ENCODE measurements at regions of chr18 and their contacts with region 1.

Region 1: DNA sequence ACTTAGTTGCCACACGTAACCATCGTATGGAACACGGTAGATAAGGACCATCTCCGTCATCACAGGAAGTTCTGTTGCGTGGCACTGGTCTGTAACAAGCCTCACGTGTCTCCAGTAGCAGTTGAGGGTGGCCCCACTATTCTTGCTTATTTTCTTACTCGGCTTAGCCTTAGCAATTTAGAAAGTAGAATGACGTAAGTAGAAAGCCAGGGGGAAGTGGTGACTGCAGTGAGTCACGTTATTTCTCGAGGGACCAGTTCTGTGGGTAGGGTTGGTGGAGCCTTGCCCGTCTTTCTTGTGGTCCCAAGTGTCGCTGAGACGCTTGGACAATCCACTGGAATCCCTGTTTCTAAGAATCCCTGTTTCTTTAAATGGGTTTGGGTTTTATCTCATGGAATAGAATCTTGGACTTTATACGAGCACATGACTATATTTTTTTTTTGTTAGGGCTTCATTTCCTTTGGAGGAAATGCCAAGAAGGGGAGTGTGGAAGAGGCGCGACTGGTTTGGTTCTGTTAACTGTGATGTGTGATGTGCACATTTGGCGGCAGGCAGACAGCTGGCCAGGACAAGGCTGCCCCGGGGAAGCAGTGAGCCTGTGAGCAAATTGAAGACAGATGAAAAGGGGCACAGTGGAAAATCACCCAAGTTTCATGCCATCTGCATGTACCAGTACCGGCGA is 96.2 kb downstream of the CABLES1 start:
- DNase-seq: peak; percentile 14 to 86 (median 70)
- ATAC-seq: peak; percentile 93
- H3K4me3 ChIP-seq: peak overlapping the region; percentile 10
- H3K4me3 Mint-ChIP-seq: peak overlapping the region in 9 of 10 donors; percentile 7 to 80 (median 55)
- H3K27ac ChIP-seq: no peak overlapping the region
- H3K27ac Mint-ChIP-seq: peak overlapping the region; percentile 76 to 96 (median 88)
- H3K4me1 ChIP-seq: peaks cover 8 to 14% of the 10 kb centered on the region in 2 donors
- H3K4me1 Mint-ChIP-seq: peaks cover 0 to 78% (median 21%) of the 10 kb centered on the region in 7 donors
- H3K27me3 ChIP-seq: no peaks in the 10 kb centered on the region
- H3K27me3 Mint-ChIP-seq: no peaks in the 10 kb centered on the region

Region 2: GRCh38 chr18:22694954-22695353 is 536.5 kb before region 1 on chr18:
- CTCF ChIA-PET with region 1: no interaction called
- POLR2A ChIA-PET with region 1: no interaction called
- intact Hi-C with region 1: no loop called
- DNase-seq: no peak
- ATAC-seq: no peak
- H3K4me3 ChIP-seq: no peak overlapping the region
- H3K4me3 Mint-ChIP-seq: no peak overlapping the region
- H3K27ac ChIP-seq: no peak overlapping the region
- H3K27ac Mint-ChIP-seq: no peak overlapping the region
- H3K4me1 ChIP-seq: no peaks in the 10 kb centered on the region
- H3K4me1 Mint-ChIP-seq: no peaks in the 10 kb centered on the region
- H3K27me3 ChIP-seq: no peaks in the 10 kb centered on the region
- H3K27me3 Mint-ChIP-seq: peaks cover 1 to 14% (median 9%) of the 10 kb centered on the region in 5 donors

Region 3: GRCh38 chr18:23020555-23021294 is 210.8 kb before region 1 on chr18:
- CTCF ChIA-PET with region 1: no interaction called
- POLR2A ChIA-PET with region 1: no interaction called
- intact Hi-C with region 1: loop called in 1 of 2 experiments (anchors 10 kb)
- DNase-seq: peak in 1 of 9 donors; percentile 2
- ATAC-seq: no peak
- H3K4me3 ChIP-seq: peak overlapping the region; percentile 43
- H3K4me3 Mint-ChIP-seq: peak overlapping the region in 9 of 10 donors; percentile 1 to 82 (median 65)
- H3K27ac ChIP-seq: peak overlapping the region; percentile 45
- H3K27ac Mint-ChIP-seq: peak overlapping the region in 7 of 9 donors; percentile 39 to 80 (median 53)
- H3K4me1 ChIP-seq: peaks cover 5 to 9% of the 10 kb centered on the region in 2 donors
- H3K4me1 Mint-ChIP-seq: peaks cover 0 to 17% (median 10%) of the 10 kb centered on the region in 7 donors
- H3K27me3 ChIP-seq: no peaks in the 10 kb centered on the region
- H3K27me3 Mint-ChIP-seq: no peaks in the 10 kb centered on the region

Region 4: DNA sequence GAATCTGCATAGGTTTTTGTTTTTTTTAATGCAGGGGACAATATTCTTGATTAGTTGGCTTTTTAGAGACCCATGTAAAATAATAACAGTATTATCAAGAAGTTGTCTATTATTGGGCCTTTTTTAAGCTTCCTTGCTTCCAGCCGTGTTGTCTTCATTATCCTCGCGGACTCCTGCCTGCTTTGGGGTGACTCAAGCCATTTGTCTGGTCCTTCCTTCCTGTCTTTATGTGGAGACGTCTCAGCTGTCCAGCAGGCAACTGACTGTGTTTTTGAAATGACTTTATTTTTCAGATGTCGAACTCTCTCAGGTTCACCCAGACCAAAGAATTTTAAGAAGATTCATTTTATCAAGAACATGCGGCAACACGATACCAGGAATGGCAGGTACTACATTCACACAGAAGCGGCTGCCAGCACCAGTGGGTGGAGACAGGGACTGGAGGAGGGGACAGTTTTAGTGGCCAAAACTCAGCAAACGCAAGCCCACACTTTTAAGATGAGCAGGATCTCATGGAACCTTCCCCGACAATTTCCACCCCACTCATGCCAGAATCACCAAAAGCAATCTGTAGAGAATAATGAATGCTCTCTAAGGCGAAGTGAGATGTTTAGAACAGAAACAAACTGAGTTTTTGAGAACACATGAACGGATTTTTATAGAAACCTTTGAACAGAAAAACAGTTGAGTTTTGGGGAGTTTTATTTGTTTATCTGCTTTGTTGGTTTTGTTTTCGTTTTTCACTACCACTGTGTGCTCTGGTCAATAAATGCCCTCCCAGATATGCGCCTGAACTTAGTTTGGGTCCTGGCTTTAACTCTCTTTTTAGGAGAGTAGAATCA is 37.1 kb before region 1 on chr18:
- CTCF ChIA-PET with region 1: no interaction called
- POLR2A ChIA-PET with region 1: no interaction called
- intact Hi-C with region 1: loop called in 1 of 2 experiments (anchors 5 kb)
- DNase-seq: no peak
- ATAC-seq: no peak
- H3K4me3 ChIP-seq: no peak overlapping the region
- H3K4me3 Mint-ChIP-seq: no peak overlapping the region
- H3K27ac ChIP-seq: no peak overlapping the region
- H3K27ac Mint-ChIP-seq: peak overlapping the region in 1 of 9 donors; percentile 4
- H3K4me1 ChIP-seq: no peaks in the 10 kb centered on the region
- H3K4me1 Mint-ChIP-seq: peaks cover 3 to 11% (median 7%) of the 10 kb centered on the region in 7 donors
- H3K27me3 ChIP-seq: no peaks in the 10 kb centered on the region
- H3K27me3 Mint-ChIP-seq: peaks cover 0 to 8% (median 0%) of the 10 kb centered on the region in 5 donors

Region 5: GRCh38 chr18:23259701-23260582 is 28.5 kb after region 1 on chr18:
- CTCF ChIA-PET with region 1: no interaction called
- POLR2A ChIA-PET with region 1: no interaction called
- intact Hi-C with region 1: loop called in 1 of 2 experiments (anchors 2 kb)
- DNase-seq: peak in 4 of 9 donors; percentile 15 to 21 (median 18)
- ATAC-seq: peak; percentile 49
- H3K4me3 ChIP-seq: peak overlapping the region; percentile 43
- H3K4me3 Mint-ChIP-seq: peak overlapping the region; percentile 63 to 92 (median 82)
- H3K27ac ChIP-seq: peak overlapping the region; percentile 54
- H3K27ac Mint-ChIP-seq: peak overlapping the region; percentile 1 to 89 (median 78)
- H3K4me1 ChIP-seq: peaks cover 0 to 25% of the 10 kb centered on the region in 2 donors
- H3K4me1 Mint-ChIP-seq: peaks cover 21 to 41% (median 35%) of the 10 kb centered on the region in 7 donors
- H3K27me3 ChIP-seq: no peaks in the 10 kb centered on the region
- H3K27me3 Mint-ChIP-seq: no peaks in the 10 kb centered on the region

Region 6: GRCh38 chr18:23629444-23629946 is 398.0 kb after region 1 on chr18:
- CTCF ChIA-PET with region 1: no interaction called
- POLR2A ChIA-PET with region 1: no interaction called
- intact Hi-C with region 1: no loop called
- DNase-seq: no peak
- ATAC-seq: no peak
- H3K4me3 ChIP-seq: no peak overlapping the region
- H3K4me3 Mint-ChIP-seq: no peak overlapping the region
- H3K27ac ChIP-seq: no peak overlapping the region
- H3K27ac Mint-ChIP-seq: peak overlapping the region in 1 of 9 donors; percentile 45
- H3K4me1 ChIP-seq: no peaks in the 10 kb centered on the region
- H3K4me1 Mint-ChIP-seq: peaks cover 0 to 21% (median 4%) of the 10 kb centered on the region in 7 donors
- H3K27me3 ChIP-seq: no peaks in the 10 kb centered on the region
- H3K27me3 Mint-ChIP-seq: peaks cover 0 to 21% (median 4%) of the 10 kb centered on the region in 5 donors

Measured in naive thymus-derived CD4-positive, alpha-beta T cell (primary cell).